Naive thymus-derived CD4-positive, alpha-beta T cell (primary cell): ENCODE measurements at regions of chr1 and their contacts with region 1.

Region 1: DNA sequence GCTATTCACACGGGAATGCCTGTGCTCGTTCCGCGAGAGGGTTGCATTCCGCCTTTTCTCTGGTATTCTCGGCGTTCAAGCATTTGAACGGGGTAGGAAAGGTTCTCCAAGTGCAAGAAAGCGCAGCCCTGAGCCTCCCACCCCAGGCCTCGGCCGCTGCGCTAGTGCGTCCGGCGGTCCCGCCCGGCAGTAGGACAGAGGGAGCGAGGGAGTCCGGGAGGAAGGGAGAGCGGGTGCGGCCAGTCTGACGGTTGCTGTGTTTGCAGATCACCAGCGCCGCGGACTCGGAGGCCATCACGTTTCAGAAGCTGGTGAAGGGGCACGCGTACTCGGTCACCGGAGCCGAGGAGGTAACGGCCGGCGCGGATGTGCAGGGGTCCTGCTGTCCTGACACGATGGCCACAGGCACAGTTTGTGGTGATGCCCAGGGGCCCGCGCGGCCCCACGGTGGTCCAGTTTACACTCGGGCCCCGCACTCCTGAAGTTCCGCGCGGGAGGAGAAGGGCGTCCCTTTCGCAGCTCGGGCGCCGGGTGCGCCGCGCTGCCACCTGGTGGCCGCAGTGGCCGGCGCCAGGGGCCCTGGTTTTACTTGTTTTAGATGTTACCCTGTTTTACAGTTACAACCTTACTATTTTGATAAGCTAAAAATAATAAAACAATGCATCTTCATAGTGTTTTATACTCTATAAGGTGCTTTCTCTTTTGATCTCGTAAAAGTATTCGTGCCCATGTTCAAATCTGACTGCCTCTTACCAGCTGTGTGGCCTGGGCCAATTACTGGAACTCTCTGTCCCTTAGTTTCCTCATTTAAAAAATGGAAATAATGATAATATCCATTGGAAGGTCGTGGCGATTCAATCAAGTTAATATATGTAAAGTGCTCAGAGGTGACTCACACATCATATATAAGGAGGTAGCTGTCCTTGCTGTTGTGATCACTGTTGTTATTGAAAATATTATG is 36.7 kb downstream of the CAPN2 start:
- DNase-seq: peak; percentile 46 to 78 (median 67)
- ATAC-seq: peak; percentile 89
- H3K4me3 ChIP-seq: peak overlapping the region; percentile 68
- H3K4me3 Mint-ChIP-seq: peak overlapping the region; percentile 70 to 85 (median 75)
- H3K27ac ChIP-seq: peak overlapping the region; percentile 27
- H3K27ac Mint-ChIP-seq: peak overlapping the region in 4 of 9 donors; percentile 21 to 68 (median 34)
- H3K4me1 ChIP-seq: peaks cover 7 to 10% of the 10 kb centered on the region in 2 donors
- H3K4me1 Mint-ChIP-seq: peaks cover 0 to 22% (median 8%) of the 10 kb centered on the region in 7 donors
- H3K27me3 ChIP-seq: no peaks in the 10 kb centered on the region
- H3K27me3 Mint-ChIP-seq: no peaks in the 10 kb centered on the region

Region 2: GRCh38 chr1:223712194-223712849 is 36.7 kb before region 1 on chr1 and contains the start of gene CAPN2:
- CTCF ChIA-PET with region 1: interaction called, 39 read pairs
- POLR2A ChIA-PET with region 1: interaction called, 12 read pairs
- intact Hi-C with region 1: loop called (anchors 1 kb)
- DNase-seq: peak; percentile 29 to 78 (median 51)
- ATAC-seq: peak; percentile 78
- H3K4me3 ChIP-seq: peak within 1 kb of the TSS; percentile 61
- H3K4me3 Mint-ChIP-seq: peak within 1 kb of the TSS; percentile 70 to 93 (median 84)
- H3K27ac ChIP-seq: peak within 1 kb of the TSS; percentile 83
- H3K27ac Mint-ChIP-seq: peak within 1 kb of the TSS; percentile 82 to 93 (median 88)
- H3K4me1 ChIP-seq: peaks cover 48 to 53% of the 10 kb centered on the region in 2 donors
- H3K4me1 Mint-ChIP-seq: peaks cover 52 to 69% (median 63%) of the 10 kb centered on the region in 7 donors
- H3K27me3 ChIP-seq: no peaks in the 10 kb centered on the region
- H3K27me3 Mint-ChIP-seq: peaks cover 0 to 8% (median 0%) of the 10 kb centered on the region in 5 donors
- total RNA-seq, gene CAPN2: 86.1 to 195 (median 117) TPM

Region 3: GRCh38 chr1:223726380-223727001 is 22.6 kb before region 1 on chr1:
- CTCF ChIA-PET with region 1: interaction called, 9 read pairs
- POLR2A ChIA-PET with region 1: no interaction called
- intact Hi-C with region 1: loop called (anchors 1 to 2 kb)
- DNase-seq: peak in 7 of 9 donors; percentile 20 to 87 (median 31)
- ATAC-seq: peak; percentile 95
- H3K4me3 ChIP-seq: no peak overlapping the region
- H3K4me3 Mint-ChIP-seq: peak overlapping the region in 9 of 10 donors; percentile 26 to 85 (median 54)
- H3K27ac ChIP-seq: peak overlapping the region; percentile 28
- H3K27ac Mint-ChIP-seq: peak overlapping the region; percentile 11 to 91 (median 75)
- H3K4me1 ChIP-seq: peaks cover 18 to 50% of the 10 kb centered on the region in 2 donors
- H3K4me1 Mint-ChIP-seq: peaks cover 43 to 80% (median 63%) of the 10 kb centered on the region in 7 donors
- H3K27me3 ChIP-seq: no peaks in the 10 kb centered on the region
- H3K27me3 Mint-ChIP-seq: no peaks in the 10 kb centered on the region

Region 4: GRCh38 chr1:224637515-224637914 is 888.5 kb after region 1 on chr1:
- CTCF ChIA-PET with region 1: no interaction called
- POLR2A ChIA-PET with region 1: no interaction called
- intact Hi-C with region 1: no loop called
- DNase-seq: no peak
- ATAC-seq: no peak
- H3K4me3 ChIP-seq: no peak overlapping the region
- H3K4me3 Mint-ChIP-seq: peak overlapping the region in 1 of 10 donors; percentile 36
- H3K27ac ChIP-seq: no peak overlapping the region
- H3K27ac Mint-ChIP-seq: peak overlapping the region in 3 of 9 donors; percentile 38 to 84 (median 40)
- H3K4me1 ChIP-seq: no peaks in the 10 kb centered on the region
- H3K4me1 Mint-ChIP-seq: peaks cover 5 to 18% (median 10%) of the 10 kb centered on the region in 7 donors
- H3K27me3 ChIP-seq: no peaks in the 10 kb centered on the region
- H3K27me3 Mint-ChIP-seq: peaks cover 0 to 22% (median 8%) of the 10 kb centered on the region in 5 donors